Colonic mucosa (tissue), 4 donors: ENCODE measurements at regions of chr6 and their contacts with region 1.

Region 1: DNA sequence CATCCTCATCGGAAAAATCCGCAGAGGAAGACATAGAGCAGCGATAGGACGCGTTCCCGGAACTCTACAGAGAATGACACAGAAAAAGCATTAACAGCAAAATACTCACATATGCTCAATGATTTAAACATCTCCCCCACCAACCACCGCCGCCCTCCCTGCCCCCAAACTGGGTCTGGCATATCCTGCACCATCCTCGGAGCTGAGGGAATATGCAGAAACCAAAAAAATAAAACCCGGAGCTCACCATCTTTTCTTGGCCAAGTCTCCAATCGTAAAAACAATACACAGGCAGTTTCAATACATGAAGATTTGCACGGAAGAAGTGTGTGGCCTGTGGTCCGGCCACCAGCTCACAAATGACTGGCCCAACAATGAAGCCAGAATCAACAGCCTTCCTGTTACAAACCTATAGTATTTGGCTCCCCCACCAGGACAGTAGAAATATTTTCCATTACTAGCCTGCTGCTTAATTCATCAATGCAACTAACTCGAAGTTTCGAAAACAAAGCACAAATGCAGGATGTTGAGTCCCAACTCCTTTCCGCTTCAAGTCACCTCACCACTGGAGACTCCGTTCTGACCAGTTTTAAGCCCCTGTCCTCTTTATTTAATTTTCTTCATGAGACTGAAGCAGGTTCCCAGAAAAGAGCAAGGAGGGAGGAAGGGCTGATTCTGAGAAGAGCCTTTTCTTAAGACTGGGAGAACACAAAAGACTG is 103.2 kb upstream of the BEND6 start:
- DNase-seq: no peak
- H3K4me3 ChIP-seq: peak overlapping the region; percentile 19
- H3K27ac ChIP-seq: no peak overlapping the region
- H3K4me1 ChIP-seq: no peaks in the 10 kb centered on the region
- H3K27me3 ChIP-seq: no peaks in the 10 kb centered on the region
- CTCF ChIP-seq: no peak

Region 2: GRCh38 chr6:56637640-56638039 is 214.1 kb before region 1 on chr6:
- intact Hi-C with region 1: loop called (anchors 5 kb)
- DNase-seq: no peak
- H3K4me3 ChIP-seq: no peak overlapping the region
- H3K27ac ChIP-seq: no peak overlapping the region
- H3K4me1 ChIP-seq: no peaks in the 10 kb centered on the region
- H3K27me3 ChIP-seq: no peaks in the 10 kb centered on the region
- CTCF ChIP-seq: peak; percentile 48

Region 3: GRCh38 chr6:56708810-56709597 is 142.7 kb before region 1 on chr6:
- intact Hi-C with region 1: loop called (anchors 2 kb)
- DNase-seq: no peak
- H3K4me3 ChIP-seq: no peak overlapping the region
- H3K27ac ChIP-seq: no peak overlapping the region
- H3K4me1 ChIP-seq: no peaks in the 10 kb centered on the region
- H3K27me3 ChIP-seq: no peaks in the 10 kb centered on the region
- CTCF ChIP-seq: peak; percentile 61

Region 4: GRCh38 chr6:56764081-56764566 is 87.6 kb before region 1 on chr6:
- intact Hi-C with region 1: loop called (anchors 5 kb)
- DNase-seq: peak; percentile 29
- H3K4me3 ChIP-seq: no peak overlapping the region
- H3K27ac ChIP-seq: no peak overlapping the region
- H3K4me1 ChIP-seq: no peaks in the 10 kb centered on the region
- H3K27me3 ChIP-seq: no peaks in the 10 kb centered on the region
- CTCF ChIP-seq: no peak

Region 5: DNA sequence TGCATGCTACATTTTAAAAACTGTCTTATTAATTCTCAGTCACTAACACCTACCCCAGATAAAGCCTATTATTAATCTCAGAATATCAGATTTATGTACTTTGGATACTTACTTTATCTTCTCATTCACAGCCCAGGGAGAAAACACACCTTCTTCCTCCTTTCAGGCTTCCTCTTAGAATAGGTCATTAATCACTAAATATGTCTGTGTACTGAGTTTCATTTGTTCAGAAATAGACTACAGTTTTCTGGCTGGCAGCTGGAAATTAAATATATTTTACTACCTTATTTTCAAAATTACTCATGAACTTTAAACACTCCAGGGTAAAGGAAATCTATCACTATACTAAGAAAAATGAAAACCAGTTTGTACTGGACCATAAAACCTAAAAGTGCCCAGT is 61.3 kb before region 1 on chr6:
- intact Hi-C with region 1: no loop called
- DNase-seq: no peak
- H3K4me3 ChIP-seq: no peak overlapping the region
- H3K27ac ChIP-seq: no peak overlapping the region
- H3K4me1 ChIP-seq: no peaks in the 10 kb centered on the region
- H3K27me3 ChIP-seq: no peaks in the 10 kb centered on the region
- CTCF ChIP-seq: no peak